CD4-positive, alpha-beta T cell (primary cell): ENCODE measurements at regions of chr17 and their contacts with region 1.

Region 1: DNA sequence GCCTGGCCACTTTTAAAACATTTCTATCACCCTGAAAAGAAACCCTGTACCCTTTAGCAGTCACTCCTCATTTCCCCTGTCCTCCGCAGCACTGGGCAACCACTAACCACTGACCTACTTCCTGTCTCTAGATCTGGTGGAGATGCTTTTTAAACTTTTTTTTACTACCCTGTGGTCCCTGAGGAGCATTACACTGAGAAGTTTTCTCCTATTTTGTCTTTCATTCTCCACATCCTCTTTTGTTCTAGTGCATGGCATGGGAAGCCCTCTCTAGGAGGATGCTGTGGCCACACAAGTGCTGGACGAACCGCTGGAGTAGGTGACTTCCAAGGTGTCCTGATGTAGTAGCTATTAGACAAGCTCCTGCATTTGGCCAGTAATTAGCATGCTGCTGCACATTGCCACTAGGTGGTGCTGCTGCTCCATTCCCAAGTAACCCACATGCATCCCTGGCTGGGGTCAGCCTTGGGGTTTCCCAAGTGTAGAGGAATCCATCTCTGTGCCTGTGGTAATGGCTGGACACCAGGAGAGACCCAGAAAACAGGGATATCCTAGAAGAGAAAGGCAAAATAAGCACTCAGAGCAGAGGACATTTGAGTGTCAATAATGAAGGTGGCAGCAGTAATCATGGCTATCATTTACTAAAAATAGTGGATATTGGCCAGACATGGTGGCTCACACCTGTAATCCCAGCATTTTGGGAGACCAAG is 143.8 kb upstream of the CRHR1 start:
- DNase-seq: peak; percentile 55 to 86 (median 66)
- ATAC-seq: peak; percentile 69
- H3K4me3 ChIP-seq: no peak overlapping the region
- H3K4me3 Mint-ChIP-seq: no peak overlapping the region
- H3K27ac ChIP-seq: no peak overlapping the region
- H3K27ac Mint-ChIP-seq: peak overlapping the region; percentile 6
- H3K4me1 ChIP-seq: peaks cover 7% of the 10 kb centered on the region
- H3K4me1 Mint-ChIP-seq: peaks cover 8% of the 10 kb centered on the region
- H3K27me3 ChIP-seq: no peaks in the 10 kb centered on the region
- H3K27me3 Mint-ChIP-seq: no peaks in the 10 kb centered on the region
- CTCF ChIP-seq: peak; percentile 95

Region 2: GRCh38 chr17:45828628-45829027 is 188.3 kb after region 1 on chr17:
- CTCF ChIA-PET with region 1: interaction called, 70 read pairs
- POLR2A ChIA-PET with region 1: interaction called, 5 read pairs
- intact Hi-C with region 1: loop called (anchors 1 kb)
- DNase-seq: no peak
- ATAC-seq: no peak
- H3K4me3 ChIP-seq: no peak overlapping the region
- H3K4me3 Mint-ChIP-seq: no peak overlapping the region
- H3K27ac ChIP-seq: no peak overlapping the region
- H3K27ac Mint-ChIP-seq: no peak overlapping the region
- H3K4me1 ChIP-seq: peaks cover 7% of the 10 kb centered on the region
- H3K4me1 Mint-ChIP-seq: peaks cover 8% of the 10 kb centered on the region
- H3K27me3 ChIP-seq: no peaks in the 10 kb centered on the region
- H3K27me3 Mint-ChIP-seq: no peaks in the 10 kb centered on the region
- CTCF ChIP-seq: no peak

Region 3: GRCh38 chr17:45852535-45853297 is 212.4 kb after region 1 on chr17:
- CTCF ChIA-PET with region 1: interaction called, 3 read pairs
- POLR2A ChIA-PET with region 1: no interaction called
- intact Hi-C with region 1: loop called in 1 of 2 experiments (anchors 1 kb)
- DNase-seq: peak; percentile 33 to 76 (median 52)
- ATAC-seq: peak; percentile 59
- H3K4me3 ChIP-seq: no peak overlapping the region
- H3K4me3 Mint-ChIP-seq: no peak overlapping the region
- H3K27ac ChIP-seq: no peak overlapping the region
- H3K27ac Mint-ChIP-seq: no peak overlapping the region
- H3K4me1 ChIP-seq: peaks cover 9% of the 10 kb centered on the region
- H3K4me1 Mint-ChIP-seq: no peaks in the 10 kb centered on the region
- H3K27me3 ChIP-seq: peaks cover 7% of the 10 kb centered on the region in 2 experiments
- H3K27me3 Mint-ChIP-seq: peaks cover 29% of the 10 kb centered on the region
- CTCF ChIP-seq: peak; percentile 88